MCF 10A (cell line): ENCODE measurements at regions of chr22 and their contacts with region 1.

Region 1: GRCh38 chr22:29679316-29679715 is 40.5 kb upstream of the CABP7 start:
- DNase-seq: no peak
- H3K4me3 Mint-ChIP-seq: no peak overlapping the region
- H3K27ac Mint-ChIP-seq: no peak overlapping the region
- H3K4me1 Mint-ChIP-seq: no peaks in the 10 kb centered on the region
- H3K27me3 Mint-ChIP-seq: no peaks in the 10 kb centered on the region
- CTCF ChIP-seq: no peak

Region 2: GRCh38 chr22:29480512-29481264 is 198.6 kb before region 1 on chr22:
- CTCF ChIA-PET with region 1: no interaction called
- POLR2A ChIA-PET with region 1: no interaction called
- intact Hi-C with region 1: no loop called
- DNase-seq: no peak
- H3K4me3 Mint-ChIP-seq: no peak overlapping the region
- H3K27ac Mint-ChIP-seq: no peak overlapping the region
- H3K4me1 Mint-ChIP-seq: peaks cover 6% of the 10 kb centered on the region
- H3K27me3 Mint-ChIP-seq: peaks cover 44% of the 10 kb centered on the region
- CTCF ChIP-seq: no peak

Region 3: GRCh38 chr22:29689880-29690213 is 10.5 kb after region 1 on chr22:
- CTCF ChIA-PET with region 1: interaction called, 12 read pairs
- POLR2A ChIA-PET with region 1: no interaction called
- intact Hi-C with region 1: no loop called
- DNase-seq: peak; percentile 50
- H3K4me3 Mint-ChIP-seq: no peak overlapping the region
- H3K27ac Mint-ChIP-seq: no peak overlapping the region
- H3K4me1 Mint-ChIP-seq: no peaks in the 10 kb centered on the region
- H3K27me3 Mint-ChIP-seq: no peaks in the 10 kb centered on the region
- CTCF ChIP-seq: peak; percentile 62

Region 4: DNA sequence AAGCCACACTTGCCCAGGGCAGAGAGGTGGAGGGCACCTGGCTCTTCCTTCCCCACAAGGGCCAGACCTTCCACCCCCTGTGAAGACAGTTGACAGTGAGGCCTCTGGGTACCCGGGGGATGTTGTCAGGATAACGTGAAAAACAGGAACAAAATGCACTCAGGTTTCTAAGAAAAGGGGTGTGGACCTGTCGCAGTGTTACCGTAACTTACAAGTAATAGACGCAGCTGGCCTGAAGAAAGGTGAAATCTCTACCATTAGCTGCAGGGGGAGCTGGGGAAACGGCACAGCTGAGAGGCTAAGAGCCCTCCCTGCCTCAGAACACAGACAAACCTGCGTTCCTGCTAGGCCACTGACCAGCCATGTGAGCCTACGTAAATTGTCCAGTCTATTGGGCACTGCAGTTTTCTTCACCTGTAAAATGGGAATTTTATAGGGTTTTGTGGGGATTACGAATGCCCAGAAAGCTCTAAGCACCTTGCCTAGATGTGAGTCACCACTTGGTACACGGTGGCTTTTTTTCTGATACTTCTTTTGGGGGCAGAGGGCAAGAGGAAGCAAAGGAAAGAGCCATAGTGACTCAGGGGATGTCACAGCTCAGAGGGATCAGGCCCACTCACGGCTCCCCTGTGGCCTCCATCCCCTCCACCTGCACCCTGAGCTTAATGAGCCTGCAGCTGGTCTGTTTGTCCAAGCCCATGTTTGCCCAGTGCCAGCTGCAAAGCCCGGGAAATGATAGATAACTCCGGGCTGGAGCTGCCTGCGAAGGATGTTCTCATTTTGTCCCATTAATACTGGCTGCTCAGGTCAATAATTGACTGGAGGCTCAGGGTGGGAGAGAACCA is 22.1 kb after region 1 on chr22:
- CTCF ChIA-PET with region 1: no interaction called
- POLR2A ChIA-PET with region 1: no interaction called
- intact Hi-C with region 1: no loop called
- DNase-seq: peak; percentile 25
- H3K4me3 Mint-ChIP-seq: no peak overlapping the region
- H3K27ac Mint-ChIP-seq: no peak overlapping the region
- H3K4me1 Mint-ChIP-seq: no peaks in the 10 kb centered on the region
- H3K27me3 Mint-ChIP-seq: no peaks in the 10 kb centered on the region
- CTCF ChIP-seq: peak; percentile 25